Adrenal gland (tissue), 19 donors: ENCODE measurements at regions of chr7 and their contacts with region 1.

Region 1: DNA sequence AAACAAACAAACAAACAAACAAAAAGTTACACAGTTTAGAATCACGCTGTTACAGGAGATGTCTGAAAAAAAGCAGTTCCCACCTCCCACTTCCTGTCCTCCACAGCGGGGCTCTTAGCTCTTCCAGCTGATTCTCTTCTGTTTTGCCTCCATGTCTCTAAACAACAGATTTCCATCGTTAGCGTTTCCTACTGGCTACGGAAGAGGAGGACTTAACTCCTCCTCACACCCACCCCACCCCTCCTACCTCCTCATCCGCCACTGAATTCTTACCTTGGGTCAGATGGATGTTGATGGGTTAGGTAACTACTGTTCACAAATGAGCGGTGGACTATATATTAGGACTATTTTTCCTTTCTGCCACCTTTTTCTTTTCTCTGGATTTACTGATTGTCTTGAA is 36.8 kb upstream of the NUB1 start:
- DNase-seq: no peak
- H3K4me3 ChIP-seq: no peak overlapping the region
- H3K27ac ChIP-seq: no peak overlapping the region
- H3K4me1 ChIP-seq: peaks cover 4 to 8% of the 10 kb centered on the region in 2 donors
- H3K27me3 ChIP-seq: peaks cover 6% of the 10 kb centered on the region
- CTCF ChIP-seq: no peak
- POLR2A ChIP-seq: no peak

Region 2: DNA sequence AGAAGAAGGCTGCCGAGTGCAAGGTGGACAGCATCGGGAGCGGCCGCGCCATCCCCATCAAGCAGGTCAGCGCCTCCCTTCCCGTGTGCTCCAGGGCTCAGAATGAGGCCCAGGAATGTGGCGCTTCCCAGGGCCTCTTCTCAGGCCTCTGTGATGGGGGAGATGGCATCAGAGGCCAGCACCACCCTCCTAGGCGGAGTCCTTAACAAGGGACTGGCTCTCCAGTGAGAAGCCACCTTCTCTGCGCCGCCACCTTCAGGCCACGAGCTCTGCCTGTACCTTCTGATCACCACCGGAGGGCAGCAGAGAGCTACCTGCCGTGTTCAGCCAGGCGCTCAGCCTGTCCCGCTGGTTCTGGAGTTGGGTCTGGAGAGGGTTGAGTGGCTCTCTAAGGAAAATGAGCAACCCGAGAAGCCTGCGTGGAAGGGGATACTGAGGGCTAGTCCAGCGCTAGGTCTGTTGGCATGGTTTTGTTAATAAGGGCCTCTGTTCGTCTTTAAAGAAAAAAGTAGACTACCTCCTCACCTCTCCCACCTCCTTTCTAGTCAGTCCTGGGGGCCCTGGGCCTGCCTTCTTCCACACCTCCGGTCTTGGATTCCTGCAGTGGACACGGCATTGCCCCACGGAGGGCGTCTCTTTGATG is 180.9 kb before region 1 on chr7:
- intact Hi-C with region 1: loop called (anchors 10 kb)
- DNase-seq: peak; percentile 78 to 93 (median 86)
- H3K4me3 ChIP-seq: no peak overlapping the region
- H3K27ac ChIP-seq: no peak overlapping the region
- H3K4me1 ChIP-seq: peaks cover 0 to 7% of the 10 kb centered on the region in 2 donors
- H3K27me3 ChIP-seq: no peaks in the 10 kb centered on the region
- CTCF ChIP-seq: peak; percentile 91 to 98 (median 94)
- POLR2A ChIP-seq: no peak

Region 3: DNA sequence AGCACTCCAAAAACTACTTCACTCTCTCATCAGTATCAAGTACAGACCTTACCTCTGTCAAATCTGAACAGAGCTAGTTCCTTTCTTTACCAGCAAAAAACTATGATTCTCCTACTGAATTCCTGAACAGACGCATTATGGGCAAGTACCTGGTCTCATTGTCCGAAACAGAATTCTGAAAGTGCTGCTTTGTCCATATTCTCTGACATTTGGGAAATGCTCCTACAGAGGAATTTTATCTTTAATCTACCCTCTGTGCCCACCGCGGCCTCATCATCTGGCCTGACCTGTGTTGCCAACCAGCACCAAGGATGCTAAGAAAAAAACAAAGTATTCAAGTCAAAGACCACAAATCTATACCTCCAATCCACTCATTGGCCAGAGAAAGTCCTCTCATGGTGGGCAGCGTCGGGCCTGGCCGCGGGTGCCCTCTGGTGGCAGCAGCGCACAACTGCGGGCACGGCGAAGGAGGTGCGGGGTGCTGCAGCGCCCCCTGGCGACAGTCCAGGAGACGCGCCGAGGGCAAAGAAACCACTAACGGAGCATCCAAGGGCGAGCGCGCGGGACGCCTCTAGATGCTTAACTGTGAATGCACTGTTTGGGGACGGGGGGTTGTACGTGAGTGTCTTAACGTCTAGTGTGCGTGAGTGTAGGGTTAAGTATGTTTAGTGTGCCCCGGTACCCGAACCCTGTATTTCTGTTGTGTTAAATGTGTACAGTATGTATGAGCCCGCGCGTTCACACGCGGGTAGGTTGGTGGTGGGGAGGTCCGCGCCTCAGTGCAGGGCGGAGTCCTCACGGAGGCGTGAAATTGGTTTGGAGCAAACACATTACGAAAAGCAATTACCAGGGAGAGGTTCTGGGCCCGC is 132.3 kb before region 1 on chr7:
- intact Hi-C with region 1: loop called in 1 of 2 experiments (anchors 10 kb)
- DNase-seq: peak; percentile 62 to 88 (median 79)
- H3K4me3 ChIP-seq: no peak overlapping the region
- H3K27ac ChIP-seq: no peak overlapping the region
- H3K4me1 ChIP-seq: peaks cover 0 to 6% of the 10 kb centered on the region in 2 donors
- H3K27me3 ChIP-seq: peaks cover 26% of the 10 kb centered on the region
- CTCF ChIP-seq: peak; percentile 99 to 100 (median 100)
- POLR2A ChIP-seq: no peak

Region 4: DNA sequence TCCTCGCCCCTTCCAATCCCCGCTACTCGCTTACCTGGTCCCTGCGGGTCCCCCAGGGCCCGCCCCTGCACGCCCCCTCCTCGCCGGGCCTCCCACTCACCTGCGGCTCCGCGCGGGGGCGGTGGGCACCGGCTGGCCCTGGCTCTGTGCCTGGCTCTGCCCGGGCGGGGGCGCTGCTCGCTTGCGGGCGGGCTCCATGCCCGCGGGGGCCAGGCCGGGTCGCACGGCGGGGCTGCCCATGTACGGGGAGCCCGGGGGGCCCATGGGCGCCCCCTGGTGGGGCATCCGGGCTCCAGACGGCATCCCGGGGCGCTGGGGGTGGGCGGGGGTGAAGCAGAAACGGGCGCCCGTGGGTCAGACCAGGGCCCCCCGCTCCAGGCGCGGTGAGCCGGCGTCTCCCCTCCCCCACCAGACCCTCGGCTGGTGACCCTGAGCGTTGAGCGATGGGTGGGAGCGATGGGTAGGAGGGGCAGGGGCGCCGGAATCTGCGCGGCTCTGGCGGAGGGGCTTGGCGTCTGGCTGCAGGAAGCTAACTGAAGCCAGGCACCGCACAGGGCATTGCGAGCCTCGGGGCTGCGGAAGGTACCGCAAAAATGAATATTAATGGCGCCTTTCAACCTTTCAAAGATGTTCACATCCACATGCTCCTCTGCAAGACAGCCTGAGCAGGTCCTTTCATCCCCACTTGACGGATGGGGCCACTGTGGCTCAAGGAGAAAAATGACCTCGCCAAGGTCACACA is 59.3 kb before region 1 on chr7:
- intact Hi-C with region 1: loop called (anchors 5 kb)
- DNase-seq: peak in 3 of 7 donors; percentile 45 to 58 (median 57)
- H3K4me3 ChIP-seq: peak overlapping the region in 2 of 4 donors; percentile 4 to 57
- H3K27ac ChIP-seq: peak overlapping the region in 1 of 5 donors; percentile 99
- H3K4me1 ChIP-seq: peaks cover 42 to 62% of the 10 kb centered on the region in 2 donors
- H3K27me3 ChIP-seq: no peaks in the 10 kb centered on the region
- CTCF ChIP-seq: peak in 4 of 6 experiments; percentile 14 to 57 (median 33)
- POLR2A ChIP-seq: no peak